Heart right ventricle (tissue), 16 donors: ENCODE measurements at regions of chr7 and their contacts with region 1.

Region 1: GRCh38 chr7:49001610-49002033 is 77.3 kb downstream of the CDC14C start:
- DNase-seq: no peak
- ATAC-seq: peak in 4 of 8 donors; percentile 42 to 79 (median 62)
- H3K4me3 ChIP-seq: no peak overlapping the region
- H3K27ac ChIP-seq: no peak overlapping the region
- H3K4me1 ChIP-seq: no peaks in the 10 kb centered on the region
- H3K27me3 ChIP-seq: no peaks in the 10 kb centered on the region
- CTCF ChIP-seq: peak in 8 of 9 donors; percentile 30 to 62 (median 52)

Region 2: GRCh38 chr7:49791088-49791741 is 789.6 kb after region 1 on chr7:
- intact Hi-C with region 1: loop called in 1 of 10 experiments (anchors 10 kb)
- DNase-seq: peak in 1 of 2 donors; percentile 33
- ATAC-seq: peak; percentile 75 to 88 (median 79)
- H3K4me3 ChIP-seq: no peak overlapping the region
- H3K27ac ChIP-seq: peak overlapping the region in 6 of 10 donors; percentile 17 to 60 (median 35)
- H3K4me1 ChIP-seq: peaks cover 0 to 41% (median 14%) of the 10 kb centered on the region in 9 donors
- H3K27me3 ChIP-seq: no peaks in the 10 kb centered on the region
- CTCF ChIP-seq: peak; percentile 13 to 69 (median 51)